Stomach (tissue), 19 donors: ENCODE measurements at regions of chr3 and their contacts with region 1.

Region 1: GRCh38 chr3:45593708-45594609 is 592 bp upstream of the LIMD1 start:
- DNase-seq: peak; percentile 81 to 93
- H3K4me3 ChIP-seq: peak overlapping the region; percentile 64 to 79 (median 72)
- H3K27ac ChIP-seq: peak overlapping the region; percentile 89 to 96 (median 93)
- H3K4me1 ChIP-seq: peaks cover 52 to 58% (median 56%) of the 10 kb centered on the region in 4 donors
- H3K27me3 ChIP-seq: no peaks in the 10 kb centered on the region
- CTCF ChIP-seq: no peak
- EP300 ChIP-seq: no peak
- POLR2A ChIP-seq: no peak

Region 2: GRCh38 chr3:45026957-45027356 is 567.0 kb before region 1 on chr3:
- intact Hi-C with region 1: no loop called
- DNase-seq: peak in 1 of 2 donors; percentile 72
- H3K4me3 ChIP-seq: peak overlapping the region; percentile 11 to 22 (median 18)
- H3K27ac ChIP-seq: peak overlapping the region in 4 of 5 donors; percentile 44 to 62 (median 59)
- H3K4me1 ChIP-seq: peaks cover 17 to 43% (median 30%) of the 10 kb centered on the region in 4 donors
- H3K27me3 ChIP-seq: no peaks in the 10 kb centered on the region
- CTCF ChIP-seq: no peak
- EP300 ChIP-seq: no peak
- POLR2A ChIP-seq: no peak

Region 3: GRCh38 chr3:45509768-45510129 is 84.2 kb before region 1 on chr3:
- intact Hi-C with region 1: loop called (anchors 5 kb)
- DNase-seq: no peak
- H3K4me3 ChIP-seq: no peak overlapping the region
- H3K27ac ChIP-seq: peak overlapping the region in 1 of 5 donors; percentile 15
- H3K4me1 ChIP-seq: peaks cover 0 to 10% (median 3%) of the 10 kb centered on the region in 4 donors
- H3K27me3 ChIP-seq: no peaks in the 10 kb centered on the region
- CTCF ChIP-seq: no peak
- EP300 ChIP-seq: no peak
- POLR2A ChIP-seq: no peak

Region 4: DNA sequence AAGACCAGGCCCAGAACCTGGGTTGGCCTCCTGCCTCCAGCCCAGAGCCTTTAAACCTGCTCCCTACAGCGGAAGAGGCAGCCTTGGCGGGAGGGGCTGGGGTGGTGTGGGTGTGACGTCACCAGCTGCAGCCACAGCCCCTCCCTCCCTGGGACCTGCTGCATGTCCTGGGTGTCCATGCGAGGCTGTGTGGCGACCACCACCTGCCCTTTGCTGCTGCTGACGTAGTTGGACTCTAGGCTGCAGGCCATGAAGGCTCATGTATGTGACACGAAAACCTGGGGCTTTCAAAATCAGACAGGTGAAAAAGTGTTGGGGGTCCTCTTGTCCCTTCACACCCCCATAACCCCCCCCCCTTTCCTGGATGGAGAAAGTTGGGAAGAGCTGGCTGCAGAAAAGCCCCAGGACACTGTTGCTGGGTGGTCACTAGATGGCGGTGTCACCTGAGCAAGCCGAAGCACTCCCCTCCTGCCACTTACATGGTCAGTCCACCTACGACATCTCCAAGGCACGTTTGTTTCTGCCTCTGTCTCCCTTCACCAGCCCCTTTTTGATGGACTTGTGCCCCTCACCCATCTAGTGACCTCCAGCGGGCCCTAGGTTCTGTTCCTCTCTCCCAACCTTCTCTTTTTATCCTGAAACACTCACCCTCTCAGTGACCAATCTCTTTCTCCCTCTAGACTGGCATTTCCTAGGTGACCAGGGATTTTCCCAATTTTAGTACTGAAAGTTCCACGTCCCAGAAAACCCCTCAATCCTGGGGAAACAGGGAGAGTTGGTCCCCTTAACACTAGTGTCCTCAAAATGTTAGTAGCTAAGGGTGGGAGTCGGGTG is 167.1 kb after region 1 on chr3:
- intact Hi-C with region 1: no loop called
- DNase-seq: peak; percentile 50 to 86
- H3K4me3 ChIP-seq: no peak overlapping the region
- H3K27ac ChIP-seq: no peak overlapping the region
- H3K4me1 ChIP-seq: peaks cover 0 to 11% (median 6%) of the 10 kb centered on the region in 4 donors
- H3K27me3 ChIP-seq: peaks cover 0 to 14% (median 0%) of the 10 kb centered on the region in 3 donors
- CTCF ChIP-seq: peak in 5 of 7 experiments; percentile 59 to 77 (median 74)
- EP300 ChIP-seq: no peak
- POLR2A ChIP-seq: no peak

Region 5: GRCh38 chr3:45832691-45833090 is 238.7 kb after region 1 on chr3:
- intact Hi-C with region 1: no loop called
- DNase-seq: peak in 1 of 2 donors; percentile 54
- H3K4me3 ChIP-seq: no peak overlapping the region
- H3K27ac ChIP-seq: no peak overlapping the region
- H3K4me1 ChIP-seq: no peaks in the 10 kb centered on the region
- H3K27me3 ChIP-seq: no peaks in the 10 kb centered on the region
- CTCF ChIP-seq: peak in 1 of 7 experiments; percentile 6
- EP300 ChIP-seq: no peak
- POLR2A ChIP-seq: no peak